ENCODE measurements at regions of chr13 and their contacts with region 1.

Region 1: GRCh38 chr13:99656092-99656745 is 154.9 kb downstream of the TM9SF2 start:
- DNase-seq: peak; percentile 90
- ATAC-seq: peak; percentile 72
- H3K4me3 Mint-ChIP-seq: peak overlapping the region; percentile 42
- H3K27ac Mint-ChIP-seq: peak overlapping the region; percentile 32
- H3K4me1 Mint-ChIP-seq: peaks cover 44% of the 10 kb centered on the region
- H3K27me3 Mint-ChIP-seq: no peaks in the 10 kb centered on the region
- CTCF ChIP-seq: peak; percentile 92

Region 2: DNA sequence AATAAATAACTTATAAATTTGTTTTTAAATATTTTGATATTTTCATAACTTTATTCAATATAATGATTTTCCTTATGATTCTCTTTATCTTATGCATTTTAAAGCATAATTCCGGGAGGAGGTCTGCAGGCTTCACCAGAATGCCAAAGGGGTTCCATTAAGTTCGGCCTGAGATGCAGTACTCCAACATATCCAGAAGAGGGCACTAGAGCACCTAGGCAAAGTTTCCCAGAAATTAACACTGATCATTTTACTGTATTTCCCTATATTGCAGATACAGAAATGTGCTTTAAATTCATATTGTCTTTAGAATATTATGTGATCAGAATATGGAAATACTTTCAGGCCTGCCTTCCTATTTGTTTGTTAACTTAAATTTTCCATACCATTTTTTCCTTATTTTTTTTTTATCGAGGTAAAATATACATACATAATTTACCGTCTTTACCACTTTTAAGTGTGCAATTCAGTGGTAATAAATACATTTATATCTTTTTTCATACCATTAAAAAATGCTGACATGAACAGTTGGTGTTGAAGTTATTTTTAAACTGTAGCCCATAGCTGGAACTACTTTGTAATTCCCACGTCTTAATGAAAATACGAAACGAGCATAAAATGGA is 213.8 kb before region 1 on chr13:
- CTCF ChIA-PET with region 1: interaction called, 3 read pairs
- POLR2A ChIA-PET with region 1: no interaction called
- intact Hi-C with region 1: loop called (anchors 5 kb)
- DNase-seq: peak; percentile 60
- ATAC-seq: peak; percentile 86
- H3K4me3 Mint-ChIP-seq: no peak overlapping the region
- H3K27ac Mint-ChIP-seq: no peak overlapping the region
- H3K4me1 Mint-ChIP-seq: peaks cover 7% of the 10 kb centered on the region
- H3K27me3 Mint-ChIP-seq: peaks cover 2% of the 10 kb centered on the region
- CTCF ChIP-seq: peak; percentile 97

Region 3: DNA sequence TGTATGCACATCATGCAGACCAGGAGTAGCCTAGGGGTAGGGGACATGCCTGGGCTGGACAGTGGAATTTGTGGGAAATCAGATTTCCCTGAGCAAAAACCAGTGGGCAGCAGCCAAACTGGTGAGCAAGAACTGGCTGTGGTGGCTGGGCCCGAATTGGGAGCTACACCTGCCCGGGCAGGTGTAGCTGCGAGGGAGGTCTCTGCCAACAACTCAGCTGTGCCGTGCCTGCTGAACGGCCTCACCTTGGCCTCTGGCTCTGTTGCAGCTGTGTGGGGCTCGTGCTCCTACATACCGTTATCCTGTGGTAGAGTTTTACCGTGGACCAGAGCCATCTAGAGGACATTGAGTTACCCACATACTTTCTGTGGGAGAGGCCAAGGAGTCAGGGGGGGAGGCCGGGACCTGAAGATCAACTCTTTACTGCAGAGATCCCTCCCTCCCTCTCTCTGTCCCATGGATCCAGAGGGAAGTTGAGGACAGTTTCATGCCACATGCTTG is 41.8 kb before region 1 on chr13:
- CTCF ChIA-PET with region 1: interaction called, 12 read pairs
- POLR2A ChIA-PET with region 1: no interaction called
- intact Hi-C with region 1: no loop called
- DNase-seq: peak; percentile 23
- ATAC-seq: peak; percentile 83
- H3K4me3 Mint-ChIP-seq: no peak overlapping the region
- H3K27ac Mint-ChIP-seq: no peak overlapping the region
- H3K4me1 Mint-ChIP-seq: peaks cover 37% of the 10 kb centered on the region
- H3K27me3 Mint-ChIP-seq: no peaks in the 10 kb centered on the region
- CTCF ChIP-seq: no peak

Region 4: GRCh38 chr13:99895995-99896786 is 240.0 kb after region 1 on chr13:
- CTCF ChIA-PET with region 1: interaction called, 25 read pairs
- POLR2A ChIA-PET with region 1: no interaction called
- intact Hi-C with region 1: no loop called
- DNase-seq: no peak
- ATAC-seq: no peak
- H3K4me3 Mint-ChIP-seq: peak overlapping the region; percentile 61
- H3K27ac Mint-ChIP-seq: no peak overlapping the region
- H3K4me1 Mint-ChIP-seq: peaks cover 8% of the 10 kb centered on the region
- H3K27me3 Mint-ChIP-seq: peaks cover 55% of the 10 kb centered on the region
- CTCF ChIP-seq: no peak

Region 5: DNA sequence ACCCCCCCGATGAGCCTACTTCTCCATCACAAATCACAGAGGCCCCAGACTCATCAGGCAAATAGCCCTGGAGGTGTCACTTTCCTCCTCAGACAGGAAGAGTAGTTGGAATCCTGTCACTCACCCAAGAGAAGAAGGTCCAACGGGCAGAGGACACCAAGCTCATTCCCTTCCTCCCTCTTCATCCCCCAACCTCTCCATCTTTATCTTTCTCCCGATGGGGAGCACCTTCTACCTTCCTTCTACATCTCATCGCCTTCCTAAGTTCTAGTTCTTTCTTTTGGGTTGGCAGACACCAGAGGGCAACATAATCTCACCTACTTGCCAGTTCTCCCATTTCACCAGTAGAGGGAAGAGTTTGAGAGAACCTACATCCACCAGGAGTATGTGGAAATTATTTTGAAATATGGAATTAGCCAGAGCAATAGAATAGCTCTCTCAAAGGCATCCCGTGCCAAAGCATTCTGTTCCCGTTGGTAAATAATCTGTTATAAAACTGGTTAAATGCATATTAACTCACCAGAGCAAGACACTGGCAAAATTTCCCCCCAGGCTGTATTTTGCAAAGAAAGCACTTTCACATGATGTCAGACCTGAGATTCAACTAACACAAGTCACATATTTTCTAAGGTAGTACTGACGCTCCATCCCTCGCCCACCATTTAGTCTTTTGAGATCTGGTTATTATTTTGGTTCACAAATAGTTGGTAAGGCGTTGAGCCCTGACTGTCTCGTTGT is 260.3 kb after region 1 on chr13:
- CTCF ChIA-PET with region 1: interaction called, 33 read pairs
- POLR2A ChIA-PET with region 1: no interaction called
- intact Hi-C with region 1: loop called (anchors 5 kb)
- DNase-seq: peak; percentile 16
- ATAC-seq: peak; percentile 78
- H3K4me3 Mint-ChIP-seq: no peak overlapping the region
- H3K27ac Mint-ChIP-seq: no peak overlapping the region
- H3K4me1 Mint-ChIP-seq: peaks cover 12% of the 10 kb centered on the region
- H3K27me3 Mint-ChIP-seq: peaks cover 18% of the 10 kb centered on the region
- CTCF ChIP-seq: peak; percentile 94

Region 6: GRCh38 chr13:100088644-100089464 is 432.6 kb after region 1 on chr13 and contains the start of gene PCCA:
- CTCF ChIA-PET with region 1: interaction called, 15 read pairs
- POLR2A ChIA-PET with region 1: no interaction called
- intact Hi-C with region 1: no loop called
- DNase-seq: peak; percentile 88
- ATAC-seq: peak; percentile 91
- H3K4me3 Mint-ChIP-seq: peak within 1 kb of the TSS; percentile 86
- H3K27ac Mint-ChIP-seq: peak within 1 kb of the TSS; percentile 86
- H3K4me1 Mint-ChIP-seq: peaks cover 17% of the 10 kb centered on the region
- H3K27me3 Mint-ChIP-seq: no peaks in the 10 kb centered on the region
- CTCF ChIP-seq: no peak
- total RNA-seq, gene PCCA: 8.4 to 9.2 TPM

Region 7: GRCh38 chr13:100514788-100515409 is 858.7 kb after region 1 on chr13:
- CTCF ChIA-PET with region 1: interaction called, 23 read pairs
- POLR2A ChIA-PET with region 1: no interaction called
- intact Hi-C with region 1: loop called (anchors 10 kb)
- DNase-seq: peak; percentile 83
- ATAC-seq: peak; percentile 84
- H3K4me3 Mint-ChIP-seq: no peak overlapping the region
- H3K27ac Mint-ChIP-seq: no peak overlapping the region
- H3K4me1 Mint-ChIP-seq: peaks cover 10% of the 10 kb centered on the region
- H3K27me3 Mint-ChIP-seq: no peaks in the 10 kb centered on the region
- CTCF ChIP-seq: peak; percentile 99